ENCODE measurements at regions of chr4 and their contacts with region 1.

Region 1: DNA sequence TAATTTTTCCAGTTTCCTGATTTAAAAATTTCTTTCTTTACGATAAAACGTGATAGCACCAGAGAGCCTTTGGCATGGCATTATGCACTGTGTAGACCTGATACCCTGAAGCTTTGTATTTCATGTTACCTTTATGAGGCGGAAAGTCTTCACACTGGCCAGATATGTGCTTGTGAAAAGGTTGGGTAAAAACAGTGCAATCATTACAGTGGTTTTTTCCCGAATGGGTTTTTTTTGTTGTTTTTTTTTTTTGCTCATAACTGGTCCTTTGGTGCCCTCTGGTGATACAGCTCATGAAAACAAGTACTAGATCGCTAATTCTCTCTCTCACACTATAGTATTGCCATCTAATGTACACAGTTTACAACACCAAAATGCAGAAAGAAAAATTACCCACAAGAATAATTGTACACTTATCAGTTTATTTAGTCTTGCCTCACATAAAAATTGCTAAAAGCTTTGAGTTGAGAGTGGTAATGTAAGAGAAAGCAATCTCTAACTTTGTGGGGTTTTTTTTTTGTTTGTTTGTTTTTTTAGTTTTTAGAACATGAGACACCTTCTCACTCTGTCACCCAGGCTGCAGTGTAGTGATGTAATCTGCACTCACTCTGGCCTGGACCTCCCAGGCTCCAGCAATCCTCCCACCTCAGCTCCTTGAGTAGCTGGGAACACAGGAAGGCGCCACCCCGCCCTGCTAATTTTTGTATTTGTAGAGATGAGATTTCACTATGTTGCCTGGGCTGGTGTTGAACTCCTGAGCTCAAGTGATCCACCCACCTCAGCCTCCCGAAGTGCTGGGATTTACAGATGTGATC is 21.3 kb downstream of the SPCS3 start:
- DNase-seq: no peak
- ATAC-seq: peak; percentile 46 to 85 (median 56)
- H3K4me3 ChIP-seq: peak overlapping the region; percentile 59
- H3K27ac ChIP-seq: no peak overlapping the region
- H3K4me1 ChIP-seq: peaks cover 12% of the 10 kb centered on the region
- H3K27me3 ChIP-seq: no peaks in the 10 kb centered on the region
- CTCF ChIP-seq: peak; percentile 73

Region 2: GRCh38 chr4:175947117-175947722 is 393.9 kb before region 1 on chr4:
- intact Hi-C with region 1: loop called (anchors 5 kb)
- DNase-seq: no peak
- ATAC-seq: no peak
- H3K4me3 ChIP-seq: peak overlapping the region; percentile 23
- H3K27ac ChIP-seq: no peak overlapping the region
- H3K4me1 ChIP-seq: no peaks in the 10 kb centered on the region
- H3K27me3 ChIP-seq: no peaks in the 10 kb centered on the region
- CTCF ChIP-seq: peak; percentile 69

Region 3: DNA sequence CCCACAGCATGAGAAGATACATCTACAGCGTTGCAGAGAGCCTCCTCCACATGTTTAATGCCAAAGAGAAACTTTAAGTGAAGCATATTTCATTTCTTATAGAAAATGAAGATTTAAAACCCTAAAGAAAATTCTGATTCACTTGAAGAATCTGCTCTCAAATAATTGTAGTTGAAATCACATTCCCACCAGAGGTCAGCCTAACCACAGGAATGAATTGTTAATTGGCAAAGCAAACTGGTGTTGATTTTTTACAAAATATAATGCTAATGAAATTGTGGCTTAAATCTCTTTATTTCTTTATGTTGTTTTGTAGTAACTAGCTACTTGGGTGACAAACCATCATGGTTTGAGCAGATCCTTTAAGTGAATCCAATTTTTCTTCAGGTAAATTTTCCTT is 306.6 kb before region 1 on chr4:
- intact Hi-C with region 1: loop called (anchors 2 kb)
- DNase-seq: no peak
- ATAC-seq: peak in 1 of 4 donors; percentile 54
- H3K4me3 ChIP-seq: no peak overlapping the region
- H3K27ac ChIP-seq: no peak overlapping the region
- H3K4me1 ChIP-seq: no peaks in the 10 kb centered on the region
- H3K27me3 ChIP-seq: no peaks in the 10 kb centered on the region
- CTCF ChIP-seq: peak; percentile 46

Measured in psoas muscle (tissue), 8 donors.